Psoas muscle (tissue), 8 donors: ENCODE measurements at regions of chr5 and their contacts with region 1.

Region 1: GRCh38 chr5:150560401-150561193 is 52.7 kb downstream of the NDST1 start:
- DNase-seq: peak; percentile 66 to 73
- ATAC-seq: peak; percentile 82 to 89 (median 86)
- H3K4me3 ChIP-seq: no peak overlapping the region
- H3K27ac ChIP-seq: no peak overlapping the region
- H3K4me1 ChIP-seq: peaks cover 30% of the 10 kb centered on the region
- H3K27me3 ChIP-seq: no peaks in the 10 kb centered on the region
- CTCF ChIP-seq: peak; percentile 97

Region 2: DNA sequence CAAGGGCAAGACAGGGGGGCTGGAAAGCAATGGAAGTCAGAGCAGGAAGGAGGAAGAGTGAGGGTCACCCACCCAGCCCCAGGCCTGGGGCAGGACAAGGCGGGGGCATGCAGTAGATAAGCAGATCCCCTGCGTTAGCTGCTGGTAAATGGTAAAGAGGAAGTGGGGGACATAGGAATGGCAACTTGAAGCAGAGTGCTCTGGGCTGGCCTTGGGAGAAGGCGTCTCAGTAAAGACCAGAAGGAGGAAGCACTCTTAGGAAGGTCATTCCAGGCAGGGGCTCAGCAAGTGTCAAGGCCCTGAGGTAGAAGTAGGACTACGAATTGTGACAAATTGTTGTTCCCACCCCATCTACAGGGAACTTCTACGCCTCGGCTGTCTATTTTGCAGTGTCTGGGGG is 188.0 kb before region 1 on chr5:
- intact Hi-C with region 1: no loop called
- DNase-seq: no peak
- ATAC-seq: no peak
- H3K4me3 ChIP-seq: no peak overlapping the region
- H3K27ac ChIP-seq: no peak overlapping the region
- H3K4me1 ChIP-seq: peaks cover 3% of the 10 kb centered on the region
- H3K27me3 ChIP-seq: no peaks in the 10 kb centered on the region
- CTCF ChIP-seq: no peak

Region 3: DNA sequence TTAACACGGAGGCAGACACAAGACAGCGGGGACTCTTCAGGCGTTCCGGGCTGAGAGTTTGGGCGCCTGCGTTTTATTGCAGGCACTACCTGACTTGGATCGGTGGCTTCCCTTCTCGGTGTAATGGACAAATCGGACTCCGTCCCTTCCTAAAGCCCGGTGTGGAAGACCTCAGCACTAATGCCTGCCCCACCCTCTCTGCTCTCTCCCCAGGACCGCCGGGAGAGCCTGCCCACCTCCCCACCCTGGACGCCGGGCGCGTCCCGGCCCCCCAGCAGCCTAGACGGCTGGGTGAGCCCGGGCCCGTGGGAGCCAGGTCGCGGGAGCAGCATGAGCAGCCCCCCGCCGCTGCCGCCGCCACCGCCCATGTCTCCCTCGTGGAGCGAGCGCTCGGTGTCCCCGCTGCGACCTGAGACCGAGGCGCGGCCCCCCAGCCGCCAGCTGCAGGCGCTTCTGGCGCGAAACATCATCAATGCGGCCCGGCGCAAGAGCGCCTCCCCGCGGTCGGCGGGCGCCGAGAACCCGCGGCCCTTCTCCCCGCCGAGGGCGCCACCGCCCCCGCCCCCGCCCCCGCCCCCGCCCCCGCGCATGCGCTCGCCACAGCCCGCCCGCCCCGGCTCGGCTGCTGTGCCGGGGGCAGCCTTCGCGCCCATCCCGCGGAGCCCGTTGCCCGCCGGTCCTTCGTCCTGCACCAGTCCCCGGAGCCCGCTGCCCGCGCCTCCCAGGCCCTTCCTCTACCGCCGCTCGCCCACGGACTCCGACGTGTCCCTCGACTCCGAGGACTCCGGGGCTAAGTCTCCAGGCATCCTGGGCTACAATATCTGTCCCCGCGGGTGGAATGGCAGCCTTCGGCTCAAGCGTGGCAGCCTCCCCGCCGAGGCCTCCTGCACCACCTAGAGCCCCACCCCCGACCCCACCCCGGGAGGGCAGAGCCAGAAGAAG is 95.9 kb after region 1 on chr5:
- intact Hi-C with region 1: loop called (anchors 1 to 5 kb)
- DNase-seq: peak; percentile 82 to 92
- ATAC-seq: peak; percentile 55 to 59 (median 56)
- H3K4me3 ChIP-seq: peak overlapping the region; percentile 74
- H3K27ac ChIP-seq: peak overlapping the region; percentile 95
- H3K4me1 ChIP-seq: peaks cover 64% of the 10 kb centered on the region
- H3K27me3 ChIP-seq: no peaks in the 10 kb centered on the region
- CTCF ChIP-seq: peak; percentile 87

Region 4: GRCh38 chr5:150672237-150672883 is 111.8 kb after region 1 on chr5:
- intact Hi-C with region 1: loop called in 1 of 2 experiments (anchors 5 kb)
- DNase-seq: peak; percentile 59 to 69
- ATAC-seq: peak; percentile 9 to 21 (median 16)
- H3K4me3 ChIP-seq: peak overlapping the region; percentile 67
- H3K27ac ChIP-seq: peak overlapping the region; percentile 92
- H3K4me1 ChIP-seq: peaks cover 47% of the 10 kb centered on the region
- H3K27me3 ChIP-seq: no peaks in the 10 kb centered on the region
- CTCF ChIP-seq: no peak

Region 5: DNA sequence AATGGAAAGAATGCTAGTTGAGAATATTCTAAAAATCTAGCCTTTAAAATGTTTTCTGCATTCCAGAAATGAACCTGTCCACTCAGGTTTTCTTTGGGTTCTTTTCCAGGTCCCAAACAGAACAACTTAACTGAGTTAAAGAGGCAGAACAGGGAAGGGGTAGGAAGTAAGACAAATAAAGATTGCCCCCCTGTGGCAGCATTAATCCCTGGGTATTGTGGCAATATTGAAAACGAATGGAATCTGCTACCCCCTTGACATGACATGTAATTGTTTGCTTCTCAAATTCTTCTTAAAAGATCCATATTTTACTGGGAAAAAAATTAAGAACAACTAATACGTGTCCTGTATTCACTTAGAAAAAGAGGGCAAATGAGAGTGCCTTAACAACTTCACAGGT is 149.6 kb after region 1 on chr5:
- intact Hi-C with region 1: loop called (anchors 5 kb)
- DNase-seq: no peak
- ATAC-seq: peak in 2 of 4 donors; percentile 45 to 60
- H3K4me3 ChIP-seq: no peak overlapping the region
- H3K27ac ChIP-seq: no peak overlapping the region
- H3K4me1 ChIP-seq: no peaks in the 10 kb centered on the region
- H3K27me3 ChIP-seq: no peaks in the 10 kb centered on the region
- CTCF ChIP-seq: peak; percentile 45

Region 6: DNA sequence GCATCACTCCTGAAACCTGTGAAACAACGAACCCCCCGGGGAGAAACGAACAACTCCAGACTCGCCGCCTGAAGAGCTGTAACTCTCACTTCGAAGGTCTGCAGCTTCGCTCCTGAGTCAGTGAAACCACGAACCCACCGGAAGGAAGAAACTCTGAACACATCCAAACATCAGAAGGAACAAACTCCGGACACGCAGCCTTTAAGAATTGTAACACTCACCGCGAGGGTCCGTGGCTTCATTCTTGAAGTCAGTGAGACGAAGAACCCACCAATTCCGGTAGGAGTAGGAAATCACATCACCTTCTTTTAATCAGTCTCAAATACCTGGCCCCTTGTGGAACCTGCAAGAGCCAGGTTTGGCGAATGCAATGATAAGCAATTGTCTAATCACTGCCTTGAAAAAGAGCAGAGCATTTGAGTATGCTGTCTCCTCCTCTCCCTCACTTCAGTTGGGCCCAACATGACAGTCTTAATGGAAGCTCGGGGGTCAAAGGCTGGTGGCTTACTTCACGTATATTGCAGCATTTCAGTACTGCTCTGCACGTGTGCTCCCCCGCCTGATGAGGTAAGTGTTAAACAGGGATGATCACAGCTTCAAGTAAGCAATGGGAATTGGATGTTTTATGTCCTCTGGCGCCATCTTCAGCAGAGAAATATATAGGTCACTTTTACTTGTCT is 286.2 kb after region 1 on chr5:
- intact Hi-C with region 1: loop called (anchors 5 kb)
- DNase-seq: no peak
- ATAC-seq: peak; percentile 82 to 90 (median 84)
- H3K4me3 ChIP-seq: no peak overlapping the region
- H3K27ac ChIP-seq: no peak overlapping the region
- H3K4me1 ChIP-seq: no peaks in the 10 kb centered on the region
- H3K27me3 ChIP-seq: no peaks in the 10 kb centered on the region
- CTCF ChIP-seq: peak; percentile 63